Activated B cell treated with CpG ODN at 0.5 μM for 24 hours (primary cell): ENCODE measurements at regions of chr1 and their contacts with region 1.

Region 1: GRCh38 chr1:229258031-229258756 is 12.7 kb upstream of the RAB4A start:
- DNase-seq: no peak
- ATAC-seq: peak; percentile 64
- H3K4me3 Mint-ChIP-seq: no peak overlapping the region
- H3K27ac Mint-ChIP-seq: no peak overlapping the region
- H3K4me1 Mint-ChIP-seq: peaks cover 11% of the 10 kb centered on the region
- H3K27me3 Mint-ChIP-seq: no peaks in the 10 kb centered on the region
- CTCF ChIP-seq: peak; percentile 36

Region 2: GRCh38 chr1:228664399-228664914 is 593.7 kb before region 1 on chr1:
- CTCF ChIA-PET with region 1: interaction called, 12 read pairs
- POLR2A ChIA-PET with region 1: no interaction called
- intact Hi-C with region 1: loop called (anchors 1 kb)
- DNase-seq: peak; percentile 52
- ATAC-seq: peak; percentile 49
- H3K4me3 Mint-ChIP-seq: no peak overlapping the region
- H3K27ac Mint-ChIP-seq: no peak overlapping the region
- H3K4me1 Mint-ChIP-seq: no peaks in the 10 kb centered on the region
- H3K27me3 Mint-ChIP-seq: peaks cover 8% of the 10 kb centered on the region
- CTCF ChIP-seq: peak; percentile 77

Region 3: DNA sequence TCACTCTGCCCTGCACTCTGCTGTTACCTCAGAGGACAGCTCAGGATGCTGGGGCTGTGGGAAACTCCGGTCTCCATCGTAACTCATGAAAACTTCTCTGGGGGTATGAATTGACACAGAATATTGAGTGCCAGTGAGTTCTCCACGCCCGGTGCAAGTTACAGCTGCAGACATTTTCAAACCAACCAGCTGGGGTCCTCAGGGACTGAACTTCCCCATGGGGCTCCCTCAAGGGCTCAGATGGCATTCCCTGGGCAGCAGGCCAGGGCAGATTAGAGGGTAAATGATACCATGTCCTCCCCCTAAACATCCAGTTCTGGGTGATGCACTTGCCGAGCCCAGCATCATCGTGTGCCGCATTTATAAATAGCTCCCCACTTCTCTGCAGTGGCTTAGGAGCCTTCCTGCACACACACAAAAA is 112.4 kb after region 1 on chr1:
- CTCF ChIA-PET with region 1: no interaction called
- POLR2A ChIA-PET with region 1: no interaction called
- intact Hi-C with region 1: no loop called
- DNase-seq: peak; percentile 22
- ATAC-seq: peak; percentile 89
- H3K4me3 Mint-ChIP-seq: no peak overlapping the region
- H3K27ac Mint-ChIP-seq: no peak overlapping the region
- H3K4me1 Mint-ChIP-seq: peaks cover 8% of the 10 kb centered on the region
- H3K27me3 Mint-ChIP-seq: peaks cover 21% of the 10 kb centered on the region
- CTCF ChIP-seq: no peak

Region 4: DNA sequence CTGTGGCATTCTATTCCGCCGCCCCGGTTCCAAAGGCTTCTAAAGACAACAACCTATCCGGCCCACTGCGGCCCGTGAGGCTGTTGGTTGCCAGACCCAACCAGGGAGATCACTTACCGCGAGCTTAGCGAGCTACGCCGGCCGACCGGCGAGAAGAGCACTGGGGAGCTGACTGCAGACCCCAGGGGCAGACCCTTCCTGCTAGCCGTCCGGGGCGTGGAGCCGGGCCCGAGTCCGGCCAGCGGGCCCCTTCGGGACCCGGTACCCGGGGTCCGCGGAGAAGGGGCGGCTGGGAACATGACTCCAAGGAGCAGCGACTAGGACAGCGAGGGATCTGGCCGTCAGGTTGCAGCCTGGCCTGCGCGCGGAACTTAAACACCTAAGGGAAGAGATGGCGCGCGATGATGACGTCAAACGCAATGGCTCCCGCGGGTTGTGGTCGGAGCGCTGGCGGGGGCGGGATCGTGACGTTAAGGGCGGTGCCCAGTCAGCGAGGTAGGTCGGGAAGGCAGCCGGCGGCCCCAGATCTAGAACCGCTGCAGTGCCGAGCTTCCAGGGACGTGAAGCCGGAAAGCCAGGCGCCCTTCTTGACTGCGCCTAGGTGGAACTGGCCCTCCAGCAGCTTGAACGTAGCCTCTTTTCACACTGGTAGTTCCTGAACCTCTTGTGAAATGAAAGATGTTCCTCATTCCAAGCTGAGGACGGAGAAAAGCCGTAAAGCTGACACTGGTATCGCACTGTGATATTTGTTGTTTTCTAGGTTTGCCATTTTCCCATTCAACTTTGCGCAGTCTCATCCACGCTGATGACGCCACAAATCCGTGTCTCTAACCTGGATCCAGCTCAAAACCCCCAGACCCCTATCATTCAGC is 250.0 kb after region 1 on chr1 and contains the start of gene NUP133:
- CTCF ChIA-PET with region 1: interaction called, 20 read pairs
- POLR2A ChIA-PET with region 1: interaction called, 3 read pairs
- intact Hi-C with region 1: no loop called
- DNase-seq: peak; percentile 97
- ATAC-seq: peak; percentile 92
- H3K4me3 Mint-ChIP-seq: peak within 1 kb of the TSS; percentile 90
- H3K27ac Mint-ChIP-seq: peak within 1 kb of the TSS; percentile 97
- H3K4me1 Mint-ChIP-seq: peaks cover 26% of the 10 kb centered on the region
- H3K27me3 Mint-ChIP-seq: peaks cover 1% of the 10 kb centered on the region
- CTCF ChIP-seq: no peak
- total RNA-seq, gene NUP133: 49.6 and 56.2 TPM in 2 replicates

Region 5: DNA sequence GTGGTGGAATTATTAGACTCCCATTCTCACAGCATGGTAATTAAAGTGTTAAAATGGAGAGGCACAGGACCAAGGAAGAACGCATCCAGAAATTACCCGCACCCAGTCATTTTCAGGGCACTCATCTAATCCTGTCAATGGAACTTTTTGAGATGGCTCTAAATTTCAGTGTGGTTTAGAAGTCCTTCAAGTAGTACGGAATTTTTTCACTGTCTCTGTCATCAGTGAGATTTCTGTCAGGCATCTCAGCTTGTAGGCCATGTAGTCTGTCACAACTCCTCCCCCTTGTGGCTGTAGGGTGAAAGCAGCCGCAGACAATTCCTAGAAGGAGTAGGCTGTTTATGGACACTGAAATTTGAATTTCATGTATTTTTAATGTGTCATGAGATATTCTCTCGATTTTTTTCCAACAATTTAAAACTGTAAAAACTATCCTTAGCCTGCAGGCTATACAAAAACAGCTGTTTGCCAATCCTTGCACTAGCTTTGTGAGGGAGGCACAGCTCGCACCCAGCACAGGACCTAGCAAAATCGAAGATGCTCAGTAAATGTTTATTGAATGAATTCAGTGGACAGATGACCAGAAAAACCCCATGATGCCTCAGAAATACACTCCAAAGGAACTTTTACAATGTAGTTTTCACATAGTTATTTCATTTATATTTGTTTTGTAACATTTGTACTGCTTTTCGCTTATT is 256.5 kb after region 1 on chr1:
- CTCF ChIA-PET with region 1: interaction called, 83 read pairs
- POLR2A ChIA-PET with region 1: no interaction called
- intact Hi-C with region 1: loop called (anchors 1 kb)
- DNase-seq: peak; percentile 19
- ATAC-seq: peak; percentile 97
- H3K4me3 Mint-ChIP-seq: no peak overlapping the region
- H3K27ac Mint-ChIP-seq: no peak overlapping the region
- H3K4me1 Mint-ChIP-seq: peaks cover 4% of the 10 kb centered on the region
- H3K27me3 Mint-ChIP-seq: no peaks in the 10 kb centered on the region
- CTCF ChIP-seq: peak; percentile 15